Sigmoid colon (tissue), 7 donors: ENCODE measurements at regions of chrX and their contacts with region 1.

Region 1: DNA sequence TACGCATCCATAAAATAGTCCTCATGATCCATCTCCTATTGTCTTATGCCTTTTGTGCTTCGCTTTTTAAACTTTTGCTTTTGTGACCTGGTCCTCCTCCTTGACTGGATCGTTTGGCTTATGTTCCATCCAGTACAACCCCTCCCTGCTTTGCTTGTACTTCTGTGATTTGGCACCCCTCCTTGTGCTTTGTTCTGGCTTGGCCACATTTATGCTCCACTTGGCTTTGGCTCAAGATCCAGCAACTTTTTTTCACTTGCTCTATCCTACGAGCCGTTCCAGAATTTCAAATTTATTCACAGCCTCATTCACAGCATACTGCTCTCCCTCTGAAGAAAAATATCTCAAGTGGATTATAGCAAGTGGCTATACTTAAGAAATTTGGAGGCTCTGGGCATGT is 28.0 kb upstream of the GLRA2 start:
- DNase-seq: peak; percentile 66
- H3K4me3 ChIP-seq: no peak overlapping the region
- H3K27ac ChIP-seq: peak overlapping the region in 3 of 4 donors; percentile 25 to 56 (median 48)
- H3K4me1 ChIP-seq: peaks cover 0 to 35% (median 11%) of the 10 kb centered on the region in 4 donors
- H3K27me3 ChIP-seq: no peaks in the 10 kb centered on the region
- CTCF ChIP-seq: no peak
- EP300 ChIP-seq: no peak
- POLR2A ChIP-seq: no peak

Region 2: DNA sequence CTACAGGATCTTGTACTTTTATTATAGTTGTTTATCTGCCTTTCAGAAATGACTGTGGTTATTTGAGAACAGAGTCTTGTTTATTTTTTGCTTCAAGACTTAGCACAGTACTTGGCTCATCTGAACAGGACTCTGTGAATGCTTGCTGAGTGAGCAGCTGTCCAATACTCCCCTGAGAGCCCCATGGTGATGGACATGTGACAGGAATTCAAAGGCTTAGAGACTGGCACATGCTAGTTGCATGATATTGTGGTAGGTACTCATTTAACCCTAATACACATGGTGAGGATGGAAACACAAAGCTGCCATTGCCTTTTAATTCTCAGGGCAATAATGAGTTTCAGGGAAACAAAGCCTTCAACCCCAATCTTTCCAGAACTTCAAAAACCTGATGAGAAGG is 568.9 kb before region 1 on chrX:
- intact Hi-C with region 1: no loop called
- DNase-seq: no peak
- H3K4me3 ChIP-seq: no peak overlapping the region
- H3K27ac ChIP-seq: no peak overlapping the region
- H3K4me1 ChIP-seq: peaks cover 0 to 1% (median under 1%) of the 10 kb centered on the region in 4 donors
- H3K27me3 ChIP-seq: peaks cover 0 to 5% (median under 1%) of the 10 kb centered on the region in 3 donors
- CTCF ChIP-seq: no peak
- EP300 ChIP-seq: no peak
- POLR2A ChIP-seq: no peak

Region 3: DNA sequence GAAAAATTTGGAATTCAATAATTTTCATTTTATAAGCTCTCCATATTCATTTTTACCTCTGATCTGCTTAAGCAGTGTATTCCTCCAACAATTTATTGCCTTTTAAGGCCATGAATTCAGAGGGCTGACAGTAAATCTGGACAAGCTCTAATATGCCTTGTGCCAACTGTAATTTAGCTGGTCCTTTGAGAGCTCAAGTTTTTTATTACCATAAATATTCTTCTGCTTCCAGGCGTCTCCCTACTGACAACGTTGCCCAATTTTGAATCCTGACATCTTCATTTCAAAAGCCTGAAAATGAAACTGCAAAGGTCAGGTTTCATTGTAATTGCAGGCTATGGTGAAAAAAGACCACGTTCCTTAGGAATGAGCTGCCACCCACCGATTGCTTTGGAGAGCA is 375.9 kb before region 1 on chrX:
- intact Hi-C with region 1: loop called (anchors 10 kb)
- DNase-seq: no peak
- H3K4me3 ChIP-seq: no peak overlapping the region
- H3K27ac ChIP-seq: peak overlapping the region; percentile 45 to 77 (median 70)
- H3K4me1 ChIP-seq: peaks cover 0 to 14% (median 0%) of the 10 kb centered on the region in 4 donors
- H3K27me3 ChIP-seq: no peaks in the 10 kb centered on the region
- CTCF ChIP-seq: no peak
- EP300 ChIP-seq: no peak
- POLR2A ChIP-seq: no peak

Region 4: GRCh38 chrX:14449782-14450181 is 51.5 kb before region 1 on chrX:
- intact Hi-C with region 1: no loop called
- DNase-seq: no peak
- H3K4me3 ChIP-seq: no peak overlapping the region
- H3K27ac ChIP-seq: no peak overlapping the region
- H3K4me1 ChIP-seq: no peaks in the 10 kb centered on the region
- H3K27me3 ChIP-seq: no peaks in the 10 kb centered on the region
- CTCF ChIP-seq: no peak
- EP300 ChIP-seq: no peak
- POLR2A ChIP-seq: no peak